AG04449 (cell line): ENCODE measurements at regions of chr15 and their contacts with region 1.

Region 1: GRCh38 chr15:69225355-69226025 is 65.1 kb downstream of the GLCE start:
- DNase-seq: peak; percentile 10
- H3K4me3 ChIP-seq: no peak overlapping the region
- CTCF ChIP-seq: no peak

Region 2: GRCh38 chr15:69067296-69067695 is 158.2 kb before region 1 on chr15:
- CTCF ChIA-PET with region 1: interaction called, 18 read pairs
- POLR2A ChIA-PET with region 1: no interaction called
- DNase-seq: no peak
- H3K4me3 ChIP-seq: no peak overlapping the region
- CTCF ChIP-seq: no peak

Region 3: GRCh38 chr15:69394556-69395282 is 169.2 kb after region 1 on chr15:
- CTCF ChIA-PET with region 1: interaction called, 11 read pairs
- POLR2A ChIA-PET with region 1: no interaction called
- DNase-seq: no peak
- H3K4me3 ChIP-seq: no peak overlapping the region
- CTCF ChIP-seq: peak; percentile 99

Region 4: GRCh38 chr15:69443032-69443611 is 217.6 kb after region 1 on chr15:
- CTCF ChIA-PET with region 1: no interaction called
- POLR2A ChIA-PET with region 1: no interaction called
- DNase-seq: no peak
- H3K4me3 ChIP-seq: no peak overlapping the region
- CTCF ChIP-seq: no peak